ENCODE measurements at regions of chr11 and their contacts with region 1.

Region 1: GRCh38 chr11:31397239-31397834 is 27.7 kb downstream of the DNAJC24 start:
- DNase-seq: no peak
- H3K4me3 Mint-ChIP-seq: no peak overlapping the region
- H3K27ac Mint-ChIP-seq: no peak overlapping the region
- H3K4me1 Mint-ChIP-seq: no peaks in the 10 kb centered on the region
- H3K27me3 Mint-ChIP-seq: no peaks in the 10 kb centered on the region

Region 2: DNA sequence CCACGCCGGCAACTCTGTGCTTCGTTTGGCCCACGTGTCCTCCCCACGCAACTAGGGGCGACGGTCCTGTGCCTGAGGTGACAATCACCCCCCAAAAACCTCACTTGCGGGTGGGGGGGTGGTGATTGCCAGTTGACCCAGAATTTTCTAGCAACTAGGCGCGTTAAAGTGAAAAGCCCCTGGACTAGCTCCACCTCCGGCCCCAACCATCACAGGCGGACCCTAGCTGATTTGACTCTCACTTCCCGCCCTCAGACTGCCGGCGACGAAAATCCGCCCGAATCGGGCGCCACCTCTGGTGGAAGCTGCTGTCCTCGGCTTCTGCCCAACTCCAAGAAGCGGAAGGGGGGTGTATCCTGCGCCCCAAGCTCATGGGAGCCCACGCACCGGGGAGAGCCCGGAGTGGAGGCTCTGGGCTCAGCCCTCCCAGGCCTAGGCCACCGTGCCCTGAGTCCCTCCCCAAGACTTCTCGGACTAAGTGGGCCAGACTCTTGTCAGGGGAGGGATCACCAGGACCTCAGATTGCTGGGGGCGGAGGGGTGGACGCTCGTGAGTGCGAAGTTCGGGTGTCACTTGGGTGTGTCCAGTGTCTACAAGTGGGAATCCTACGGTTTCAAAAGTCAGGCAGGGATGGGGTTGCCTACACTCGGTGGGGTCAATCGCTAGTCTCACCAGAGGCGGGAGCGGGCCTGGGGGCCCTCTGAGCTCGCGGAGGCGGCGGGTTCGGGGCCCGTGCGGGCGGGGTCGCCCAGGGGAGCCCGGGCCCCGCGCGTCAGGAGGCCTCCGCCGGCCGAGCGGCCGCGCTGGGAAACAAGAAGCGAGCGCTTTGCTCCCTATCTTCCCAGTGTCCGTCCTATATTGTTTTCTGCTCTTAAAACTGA is 401.5 kb after region 1 on chr11:
- CTCF ChIA-PET with region 1: no interaction called
- POLR2A ChIA-PET with region 1: no interaction called
- intact Hi-C with region 1: loop called (anchors 5 kb)
- DNase-seq: peak; percentile 53
- H3K4me3 Mint-ChIP-seq: peak overlapping the region; percentile 8
- H3K27ac Mint-ChIP-seq: no peak overlapping the region
- H3K4me1 Mint-ChIP-seq: peaks cover 36% of the 10 kb centered on the region
- H3K27me3 Mint-ChIP-seq: peaks cover 76% of the 10 kb centered on the region

Region 3: DNA sequence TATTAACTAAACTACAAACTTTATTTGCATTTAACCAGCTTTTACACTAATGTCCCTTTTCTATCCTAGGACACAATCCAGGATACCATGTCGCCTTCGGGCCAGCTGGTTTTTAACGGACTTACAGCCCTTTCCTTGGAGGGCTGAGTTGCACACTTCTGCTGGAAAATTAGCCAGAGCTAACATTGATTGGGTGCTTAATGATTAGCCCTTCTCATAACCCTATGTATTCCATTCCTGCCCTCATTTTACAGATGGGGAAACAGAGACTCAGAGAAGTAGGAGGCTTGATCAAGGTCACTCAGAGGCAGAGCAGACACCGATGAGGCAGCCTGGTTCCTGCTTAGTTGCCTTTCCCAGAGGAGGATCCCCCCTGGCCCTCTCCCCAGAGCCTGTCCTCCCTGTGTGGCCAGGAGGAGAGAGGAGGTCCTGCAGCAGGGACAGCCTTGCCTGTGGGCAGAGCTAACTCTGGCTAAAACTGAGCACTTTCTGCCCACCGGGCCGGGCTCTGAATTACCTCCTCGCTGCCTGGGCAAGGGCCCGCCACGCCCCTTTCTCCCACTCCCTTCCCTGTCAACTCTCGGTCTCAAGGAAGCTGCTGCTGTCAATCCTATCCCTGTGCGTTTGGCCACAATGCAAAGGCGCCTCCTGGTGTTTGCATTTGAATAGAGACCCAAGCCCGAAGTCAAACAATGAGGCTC is 473.4 kb after region 1 on chr11:
- CTCF ChIA-PET with region 1: interaction called, 14 read pairs
- POLR2A ChIA-PET with region 1: no interaction called
- intact Hi-C with region 1: loop called (anchors 5 kb)
- DNase-seq: peak; percentile 40
- H3K4me3 Mint-ChIP-seq: no peak overlapping the region
- H3K27ac Mint-ChIP-seq: no peak overlapping the region
- H3K4me1 Mint-ChIP-seq: no peaks in the 10 kb centered on the region
- H3K27me3 Mint-ChIP-seq: peaks cover 19% of the 10 kb centered on the region

Region 4: GRCh38 chr11:32006799-32007388 is 609.6 kb after region 1 on chr11:
- CTCF ChIA-PET with region 1: interaction called, 7 read pairs
- POLR2A ChIA-PET with region 1: no interaction called
- intact Hi-C with region 1: loop called (anchors 1 kb)
- DNase-seq: peak; percentile 20
- H3K4me3 Mint-ChIP-seq: no peak overlapping the region
- H3K27ac Mint-ChIP-seq: no peak overlapping the region
- H3K4me1 Mint-ChIP-seq: no peaks in the 10 kb centered on the region
- H3K27me3 Mint-ChIP-seq: peaks cover 30% of the 10 kb centered on the region